ENCODE measurements at regions of chr5 and their contacts with region 1.

Region 1: DNA sequence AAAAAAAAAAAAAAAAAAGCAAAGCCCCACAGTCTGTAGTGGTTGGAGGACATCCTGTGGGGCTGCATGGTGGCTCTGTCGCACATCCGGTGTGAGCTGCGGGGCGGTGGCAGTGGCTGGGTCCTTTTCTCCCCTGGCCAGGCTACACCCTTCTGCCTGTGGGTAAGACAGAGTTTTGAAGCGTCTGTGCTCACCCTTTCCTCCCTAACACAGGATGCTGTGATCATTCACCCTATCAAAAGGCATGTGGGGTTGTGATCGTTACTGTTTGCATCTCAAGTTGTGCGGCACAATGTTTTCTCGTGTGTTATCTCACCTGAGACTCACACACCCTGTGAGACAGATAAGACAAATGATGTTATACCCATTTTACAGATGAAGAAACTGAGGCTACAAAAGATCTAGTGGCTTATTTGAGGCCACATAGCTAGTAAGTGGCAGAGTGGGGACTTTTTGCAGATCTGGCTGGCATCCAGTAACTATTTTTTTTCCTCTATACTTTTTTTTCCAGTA is 17.5 kb downstream of the IRF1 start:
- DNase-seq: peak; percentile 90 to 96 (median 95)
- H3K4me3 ChIP-seq: no peak overlapping the region
- H3K4me3 Mint-ChIP-seq: peak overlapping the region; percentile 27 to 86 (median 68)
- H3K27ac ChIP-seq: peak overlapping the region; percentile 65
- H3K27ac Mint-ChIP-seq: peak overlapping the region; percentile 91 to 99 (median 97)
- H3K4me1 ChIP-seq: peaks cover 97% of the 10 kb centered on the region
- H3K4me1 Mint-ChIP-seq: peaks cover 60 to 96% (median 79%) of the 10 kb centered on the region in 4 donors
- H3K27me3 ChIP-seq: no peaks in the 10 kb centered on the region
- H3K27me3 Mint-ChIP-seq: peaks cover 0 to 5% of the 10 kb centered on the region in 2 donors

Region 2: DNA sequence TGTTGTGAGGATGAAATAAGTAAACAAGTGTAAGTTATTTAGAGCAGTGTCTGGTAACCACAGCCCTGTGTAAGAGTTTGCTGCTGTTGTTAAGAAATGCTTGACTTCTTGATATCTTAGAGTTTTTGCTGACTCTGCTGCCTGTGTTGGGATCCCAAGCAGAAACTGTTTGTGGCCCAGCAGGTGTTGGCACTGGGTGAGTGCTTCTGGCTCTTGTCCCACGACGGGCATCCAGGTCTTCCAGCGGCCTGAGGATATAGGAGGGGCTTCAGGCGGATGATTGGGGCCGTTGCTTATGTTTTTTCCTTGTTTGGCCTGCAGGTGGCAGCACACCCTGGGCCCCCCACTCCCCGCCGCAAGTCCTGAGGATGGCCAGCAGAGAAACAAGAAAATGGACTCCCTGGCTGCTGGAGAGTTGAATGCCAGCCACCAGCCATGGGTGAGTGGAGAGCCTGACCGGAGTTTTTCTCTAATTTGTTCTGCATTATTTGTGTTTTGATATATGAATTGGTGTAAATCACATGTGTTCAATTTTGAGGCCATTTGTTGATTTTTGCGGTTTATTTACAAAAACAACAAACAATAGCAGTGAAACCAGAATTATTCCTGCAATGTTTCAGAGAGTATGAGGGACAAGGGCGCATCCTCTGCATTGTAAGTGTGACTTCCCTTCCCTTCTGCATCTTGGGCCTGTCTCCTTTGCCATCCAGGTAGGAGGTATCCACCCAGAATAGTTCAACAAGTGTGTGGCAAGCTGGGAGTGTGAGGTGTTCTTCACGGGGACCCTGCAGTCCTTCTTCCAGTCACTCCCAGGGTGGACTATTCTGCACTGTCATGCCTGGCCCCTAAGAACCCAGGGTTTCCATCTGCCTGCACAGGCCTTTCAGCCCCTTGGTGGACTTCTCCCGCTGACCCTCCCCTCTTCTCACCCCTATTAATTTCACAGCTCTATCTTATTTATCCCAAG is 53.3 kb before region 1 on chr5:
- CTCF ChIA-PET with region 1: interaction called, 73 read pairs
- POLR2A ChIA-PET with region 1: interaction called, 494 read pairs
- intact Hi-C with region 1: no loop called
- DNase-seq: peak; percentile 57 to 69 (median 64)
- H3K4me3 ChIP-seq: peak overlapping the region; percentile 38 to 51
- H3K4me3 Mint-ChIP-seq: peak overlapping the region; percentile 75 to 93 (median 80)
- H3K27ac ChIP-seq: peak overlapping the region; percentile 71
- H3K27ac Mint-ChIP-seq: peak overlapping the region; percentile 96 to 99 (median 97)
- H3K4me1 ChIP-seq: peaks cover 100% of the 10 kb centered on the region
- H3K4me1 Mint-ChIP-seq: peaks cover 76 to 98% (median 86%) of the 10 kb centered on the region in 4 donors
- H3K27me3 ChIP-seq: no peaks in the 10 kb centered on the region
- H3K27me3 Mint-ChIP-seq: no peaks in the 10 kb centered on the region

Region 3: DNA sequence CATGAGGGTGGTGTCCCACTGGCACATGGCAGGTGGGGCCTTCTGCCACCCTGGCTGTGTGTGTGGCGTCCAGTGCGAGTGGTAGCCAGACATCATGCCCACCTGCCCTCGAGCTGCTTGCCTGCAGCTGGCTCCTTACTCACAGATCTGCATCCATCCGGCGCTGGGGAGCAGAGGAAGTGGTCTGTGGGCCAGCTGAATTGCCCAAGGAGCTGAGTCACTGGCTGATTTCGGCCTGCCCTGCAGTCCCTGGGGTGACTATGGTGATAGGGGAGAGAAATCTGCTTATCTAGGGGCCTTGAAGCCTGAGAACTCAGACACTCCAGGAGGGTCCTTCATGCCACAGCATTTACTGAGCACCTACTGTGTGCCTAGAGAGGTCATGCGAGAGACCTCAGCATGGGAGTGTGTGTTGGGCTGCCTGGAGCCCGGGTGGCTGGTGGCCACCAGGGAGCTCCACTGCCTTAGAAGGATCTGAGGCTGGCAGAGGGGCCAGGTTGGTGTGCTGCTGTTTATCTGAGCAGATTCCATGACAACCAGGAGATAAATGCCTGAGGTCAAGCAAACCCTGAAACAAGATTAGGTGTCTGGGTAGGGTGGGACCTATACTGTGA is 46.4 kb before region 1 on chr5:
- CTCF ChIA-PET with region 1: interaction called, 73 read pairs
- POLR2A ChIA-PET with region 1: interaction called, 494 read pairs
- intact Hi-C with region 1: no loop called
- DNase-seq: peak; percentile 37 to 83 (median 44)
- H3K4me3 ChIP-seq: peak overlapping the region; percentile 10 to 28
- H3K4me3 Mint-ChIP-seq: peak overlapping the region; percentile 67 to 83 (median 76)
- H3K27ac ChIP-seq: peak overlapping the region; percentile 77
- H3K27ac Mint-ChIP-seq: peak overlapping the region; percentile 96 to 99 (median 98)
- H3K4me1 ChIP-seq: peaks cover 100% of the 10 kb centered on the region
- H3K4me1 Mint-ChIP-seq: peaks cover 80 to 98% (median 94%) of the 10 kb centered on the region in 4 donors
- H3K27me3 ChIP-seq: no peaks in the 10 kb centered on the region
- H3K27me3 Mint-ChIP-seq: no peaks in the 10 kb centered on the region

Region 4: GRCh38 chr5:132437604-132438266 is 35.3 kb before region 1 on chr5:
- CTCF ChIA-PET with region 1: interaction called, 3 read pairs
- POLR2A ChIA-PET with region 1: interaction called, 494 read pairs
- intact Hi-C with region 1: no loop called
- DNase-seq: peak; percentile 49 to 75 (median 52)
- H3K4me3 ChIP-seq: peak overlapping the region; percentile 4 to 8
- H3K4me3 Mint-ChIP-seq: peak overlapping the region; percentile 52 to 85 (median 70)
- H3K27ac ChIP-seq: peak overlapping the region; percentile 60
- H3K27ac Mint-ChIP-seq: peak overlapping the region; percentile 89 to 96 (median 92)
- H3K4me1 ChIP-seq: peaks cover 99% of the 10 kb centered on the region
- H3K4me1 Mint-ChIP-seq: peaks cover 64 to 97% (median 83%) of the 10 kb centered on the region in 4 donors
- H3K27me3 ChIP-seq: no peaks in the 10 kb centered on the region
- H3K27me3 Mint-ChIP-seq: no peaks in the 10 kb centered on the region

Region 5: GRCh38 chr5:132446669-132447068 is 26.4 kb before region 1 on chr5:
- CTCF ChIA-PET with region 1: interaction called, 6 read pairs
- POLR2A ChIA-PET with region 1: interaction called, 24 read pairs
- intact Hi-C with region 1: no loop called
- DNase-seq: no peak
- H3K4me3 ChIP-seq: peak overlapping the region in 1 of 2 donors; percentile 7
- H3K4me3 Mint-ChIP-seq: peak overlapping the region; percentile 43 to 81 (median 75)
- H3K27ac ChIP-seq: peak overlapping the region; percentile 5
- H3K27ac Mint-ChIP-seq: peak overlapping the region; percentile 73 to 94 (median 89)
- H3K4me1 ChIP-seq: peaks cover 90% of the 10 kb centered on the region
- H3K4me1 Mint-ChIP-seq: peaks cover 56 to 97% (median 76%) of the 10 kb centered on the region in 4 donors
- H3K27me3 ChIP-seq: no peaks in the 10 kb centered on the region
- H3K27me3 Mint-ChIP-seq: no peaks in the 10 kb centered on the region

Region 6: GRCh38 chr5:132456296-132457001 is 16.6 kb before region 1 on chr5:
- CTCF ChIA-PET with region 1: interaction called, 47 read pairs
- POLR2A ChIA-PET with region 1: interaction called, 1,580 read pairs
- intact Hi-C with region 1: loop called (anchors 1 kb)
- DNase-seq: peak; percentile 76 to 87 (median 79)
- H3K4me3 ChIP-seq: peak overlapping the region; percentile 41 to 48
- H3K4me3 Mint-ChIP-seq: peak overlapping the region; percentile 73 to 89 (median 82)
- H3K27ac ChIP-seq: peak overlapping the region; percentile 77
- H3K27ac Mint-ChIP-seq: peak overlapping the region; percentile 97 to 100 (median 100)
- H3K4me1 ChIP-seq: peaks cover 100% of the 10 kb centered on the region
- H3K4me1 Mint-ChIP-seq: peaks cover 82 to 95% (median 90%) of the 10 kb centered on the region in 4 donors
- H3K27me3 ChIP-seq: no peaks in the 10 kb centered on the region
- H3K27me3 Mint-ChIP-seq: no peaks in the 10 kb centered on the region

Measured in CD4-positive, alpha-beta memory T cell (primary cell).